Ascending aorta (tissue), 2 donors: ENCODE measurements at regions of chr7 and their contacts with region 1.

Region 1: GRCh38 chr7:90455163-90456030 is 14.0 kb upstream of the PTTG1IP2 start:
- DNase-seq: no peak
- H3K4me3 ChIP-seq: peak overlapping the region; percentile 25 to 35
- H3K27ac ChIP-seq: no peak overlapping the region
- H3K4me1 ChIP-seq: no peaks in the 10 kb centered on the region
- H3K27me3 ChIP-seq: no peaks in the 10 kb centered on the region
- CTCF ChIP-seq: peak; percentile 53 to 71 (median 59)

Region 2: DNA sequence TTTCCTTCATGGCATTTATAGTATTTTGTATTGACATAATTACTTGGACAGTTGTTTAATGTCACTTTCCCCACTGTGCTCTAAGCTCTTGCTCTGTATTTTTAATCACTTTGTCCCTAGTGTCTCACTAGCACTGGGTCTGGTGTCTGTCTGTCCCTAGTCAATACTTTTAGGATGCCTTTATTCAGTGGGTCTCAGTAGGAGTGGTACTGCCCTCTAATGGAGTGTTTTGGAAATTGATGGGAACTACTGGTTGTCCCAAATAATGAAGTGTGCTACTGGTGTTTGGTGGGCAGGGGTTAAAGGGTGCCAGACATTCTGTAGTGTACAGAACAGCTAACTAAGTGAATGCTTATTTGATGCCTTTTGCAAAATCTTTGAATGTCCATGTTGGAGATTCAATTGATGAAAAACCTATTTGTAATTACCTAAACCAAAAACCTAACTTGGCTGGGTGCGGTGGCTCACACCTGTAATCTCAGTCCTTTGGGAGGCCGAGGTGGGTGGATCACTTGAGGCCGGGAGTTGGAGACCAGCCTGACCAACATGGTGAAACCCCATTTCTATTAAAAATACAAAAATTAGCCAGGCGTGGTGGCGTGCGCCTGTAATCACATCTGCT is 174.0 kb after region 1 on chr7:
- intact Hi-C with region 1: loop called (anchors 10 kb)
- DNase-seq: no peak
- H3K4me3 ChIP-seq: no peak overlapping the region
- H3K27ac ChIP-seq: no peak overlapping the region
- H3K4me1 ChIP-seq: peaks cover 0 to 6% of the 10 kb centered on the region in 2 donors
- H3K27me3 ChIP-seq: no peaks in the 10 kb centered on the region
- CTCF ChIP-seq: peak; percentile 24 to 62 (median 33)

Region 3: DNA sequence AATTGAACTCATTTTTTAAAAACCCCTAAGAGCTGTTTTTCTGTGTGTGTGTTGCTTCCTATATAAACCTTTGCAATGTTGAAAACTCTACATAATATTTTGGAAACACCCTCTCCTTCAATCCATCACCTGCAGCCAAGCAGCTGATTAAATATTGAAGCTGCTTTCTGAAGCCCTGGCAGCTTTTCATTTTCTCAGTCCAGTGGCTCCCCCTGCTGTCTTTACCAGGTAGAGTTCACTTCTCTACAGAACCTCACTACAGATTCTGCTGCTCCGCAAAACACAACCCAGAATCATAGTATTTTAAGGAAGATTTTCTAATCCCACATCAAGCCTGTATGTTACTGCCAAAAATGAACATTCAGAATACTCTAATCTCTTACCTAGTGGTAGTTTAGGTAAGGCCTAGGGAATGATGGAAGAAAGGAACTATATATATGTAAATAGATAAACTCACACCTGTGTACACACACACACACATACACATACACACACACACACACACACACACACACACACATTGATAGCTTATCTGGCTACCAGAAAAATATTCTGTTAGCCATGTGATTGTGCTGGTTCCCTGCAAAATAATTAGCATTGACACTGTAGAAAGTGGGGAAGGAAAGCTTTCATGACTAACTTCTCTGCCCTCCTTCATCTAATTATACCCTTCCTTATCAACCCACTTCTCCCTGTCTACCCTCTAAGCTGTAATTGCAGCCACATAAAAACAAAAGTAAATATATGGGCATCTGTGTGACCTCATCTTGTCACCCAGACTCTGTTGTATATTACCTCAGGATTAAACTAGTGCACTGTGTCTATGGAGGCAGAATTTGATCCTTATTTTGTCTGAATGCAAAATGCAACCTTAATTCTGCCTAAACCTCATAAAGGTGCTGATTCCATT is 579.3 kb after region 1 on chr7:
- intact Hi-C with region 1: loop called (anchors 2 kb)
- DNase-seq: peak in 1 of 2 donors; percentile 72
- H3K4me3 ChIP-seq: no peak overlapping the region
- H3K27ac ChIP-seq: no peak overlapping the region
- H3K4me1 ChIP-seq: no peaks in the 10 kb centered on the region
- H3K27me3 ChIP-seq: no peaks in the 10 kb centered on the region
- CTCF ChIP-seq: peak; percentile 27 to 64 (median 42)